ENCODE measurements at regions of chr18 and their contacts with region 1.

Region 1: DNA sequence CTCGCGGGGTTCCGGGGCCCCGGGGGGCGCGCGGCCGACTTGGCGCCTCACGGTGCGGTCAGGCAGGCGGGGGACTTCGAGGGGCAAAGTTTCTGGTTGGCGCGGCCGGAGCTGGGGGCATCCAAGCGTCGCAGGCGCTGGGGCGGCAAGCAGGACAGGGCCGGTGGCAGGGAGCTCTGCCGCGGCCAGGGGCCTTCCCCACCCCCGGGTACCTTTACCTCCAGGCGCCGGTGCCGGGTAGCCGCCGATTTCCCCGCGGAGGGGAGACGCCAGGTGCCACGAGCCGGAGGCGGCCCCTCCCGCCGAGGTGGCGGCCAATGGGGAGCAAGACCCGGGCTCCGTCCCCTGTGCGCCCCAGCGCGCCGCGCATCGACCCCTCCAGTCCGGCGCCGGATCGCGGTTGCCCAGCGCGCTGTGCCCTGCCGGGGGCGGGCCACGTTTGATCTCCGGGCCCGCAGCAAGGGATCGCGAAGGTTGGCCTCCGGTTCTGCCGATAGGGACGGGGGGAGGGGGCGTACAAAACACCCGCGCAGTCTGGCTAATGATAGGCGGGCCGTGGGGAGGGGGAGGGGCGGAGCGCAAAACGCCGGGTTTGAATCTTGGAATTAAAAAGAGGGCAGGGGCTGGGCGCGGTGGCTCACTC is at the start of gene ST8SIA5:
- DNase-seq: peak in 1 of 2 donors; percentile 31
- ATAC-seq: peak; percentile 28 to 69 (median 45)
- H3K4me3 ChIP-seq: peak within 1 kb of the TSS; percentile 28 to 56 (median 50)
- H3K27ac ChIP-seq: peak within 1 kb of the TSS in 6 of 10 donors; percentile 43 to 85 (median 68)
- H3K4me1 ChIP-seq: peaks cover 0 to 61% (median 25%) of the 10 kb centered on the region in 9 donors
- H3K27me3 ChIP-seq: peaks cover 0 to 70% (median 44%) of the 10 kb centered on the region in 7 donors
- CTCF ChIP-seq: no peak
- total RNA-seq, gene ST8SIA5: 1.4 to 16.8 (median 7.1) TPM

Region 2: DNA sequence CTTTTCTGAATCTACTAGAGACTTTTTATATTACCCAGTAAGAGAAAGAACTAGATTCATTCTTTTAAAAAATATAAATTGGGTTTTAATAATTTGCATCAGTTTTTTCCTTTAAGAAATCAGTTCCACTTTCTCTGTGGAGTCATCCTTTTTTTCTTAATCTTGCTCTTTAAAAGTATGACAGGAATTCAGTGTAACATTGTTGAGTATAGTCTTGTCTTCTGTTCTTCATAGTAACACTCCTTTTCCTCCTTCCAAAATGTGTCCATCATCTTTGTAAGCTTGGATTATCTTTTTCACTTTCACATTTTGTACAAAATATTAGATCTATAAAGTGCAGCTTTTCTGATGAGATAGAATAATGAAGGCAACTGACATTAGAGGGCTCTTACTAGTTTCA is 517.1 kb before region 1 on chr18:
- intact Hi-C with region 1: no loop called
- DNase-seq: no peak
- ATAC-seq: no peak
- H3K4me3 ChIP-seq: no peak overlapping the region
- H3K27ac ChIP-seq: no peak overlapping the region
- H3K4me1 ChIP-seq: peaks cover 0 to 12% (median 5%) of the 10 kb centered on the region in 9 donors
- H3K27me3 ChIP-seq: no peaks in the 10 kb centered on the region
- CTCF ChIP-seq: no peak

Region 3: DNA sequence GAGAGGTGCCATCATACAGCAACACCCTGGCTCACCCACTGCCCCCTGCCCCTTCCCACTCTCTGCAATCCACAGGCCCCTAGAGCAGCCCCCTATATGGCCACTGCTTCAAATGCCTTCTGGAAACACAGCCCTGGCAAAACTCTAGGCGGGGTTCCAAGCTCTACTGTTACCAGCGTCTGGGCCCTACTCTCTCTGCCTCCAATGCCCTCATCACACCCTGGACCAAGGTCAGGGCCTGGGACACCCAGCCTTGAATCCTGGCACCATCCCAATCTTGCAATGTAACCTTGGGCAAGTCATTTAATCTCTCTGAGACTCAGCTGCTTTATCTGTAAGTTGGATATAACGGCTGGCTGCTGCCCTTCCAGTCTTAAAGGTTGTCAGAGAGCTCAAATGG is 60.4 kb before region 1 on chr18:
- intact Hi-C with region 1: loop called in 1 of 10 experiments (anchors 10 kb)
- DNase-seq: peak in 1 of 2 donors; percentile 63
- ATAC-seq: peak; percentile 50 to 90 (median 80)
- H3K4me3 ChIP-seq: no peak overlapping the region
- H3K27ac ChIP-seq: peak overlapping the region in 3 of 10 donors; percentile 31 to 62 (median 55)
- H3K4me1 ChIP-seq: peaks cover 0 to 7% (median 3%) of the 10 kb centered on the region in 9 donors
- H3K27me3 ChIP-seq: no peaks in the 10 kb centered on the region
- CTCF ChIP-seq: no peak

Region 4: DNA sequence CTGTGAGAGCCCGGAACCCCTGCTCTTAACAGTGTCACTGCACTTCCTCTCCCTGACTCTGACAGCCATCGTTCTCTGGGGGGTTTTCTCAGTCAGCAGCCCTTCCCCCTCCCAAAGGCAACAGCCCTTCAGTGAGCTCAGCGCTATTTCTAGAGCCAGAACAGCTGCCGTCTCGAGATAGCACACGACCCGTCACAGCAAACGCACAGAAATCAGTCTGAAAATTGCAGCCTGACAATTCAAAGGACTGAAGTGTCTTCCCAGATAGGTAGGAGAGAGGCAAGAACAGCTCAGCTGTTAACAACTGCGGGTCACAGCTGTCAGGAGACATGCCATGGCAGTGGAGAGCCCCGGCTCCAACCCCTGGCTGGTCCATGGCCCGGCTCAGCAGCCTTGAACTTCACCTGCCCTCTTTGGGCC is 45.2 kb before region 1 on chr18:
- intact Hi-C with region 1: loop called in 2 of 10 experiments (anchors 5 kb)
- DNase-seq: peak in 1 of 2 donors; percentile 68
- ATAC-seq: peak; percentile 64 to 94 (median 86)
- H3K4me3 ChIP-seq: no peak overlapping the region
- H3K27ac ChIP-seq: peak overlapping the region in 7 of 10 donors; percentile 63 to 87 (median 84)
- H3K4me1 ChIP-seq: peaks cover 7 to 36% (median 20%) of the 10 kb centered on the region in 9 donors
- H3K27me3 ChIP-seq: no peaks in the 10 kb centered on the region
- CTCF ChIP-seq: no peak

Region 5: DNA sequence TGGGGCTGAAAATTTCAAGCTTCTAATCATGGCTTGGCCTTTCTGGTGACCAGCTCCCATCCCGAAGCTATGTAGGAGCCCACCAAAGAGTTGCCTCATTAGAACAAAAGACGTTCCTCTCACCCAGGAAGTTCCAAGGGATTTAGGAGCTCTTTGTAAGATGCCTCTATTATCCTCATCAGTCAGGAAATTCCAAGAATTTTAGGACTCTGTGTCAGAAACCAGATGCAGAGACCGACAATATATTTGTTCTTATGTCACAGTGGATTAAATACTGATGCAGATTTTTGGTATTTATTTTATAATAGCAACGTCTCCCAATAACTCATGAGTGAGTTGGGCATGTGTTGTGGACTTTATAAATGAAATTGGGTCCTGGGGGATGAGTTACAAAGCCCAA is 586.6 kb after region 1 on chr18:
- intact Hi-C with region 1: no loop called
- DNase-seq: no peak
- ATAC-seq: no peak
- H3K4me3 ChIP-seq: no peak overlapping the region
- H3K27ac ChIP-seq: no peak overlapping the region
- H3K4me1 ChIP-seq: no peaks in the 10 kb centered on the region
- H3K27me3 ChIP-seq: peaks cover 0 to 5% (median 0%) of the 10 kb centered on the region in 7 donors
- CTCF ChIP-seq: no peak